WTC11 (cell line): ENCODE measurements at regions of chr6 and their contacts with region 1.

Region 1: DNA sequence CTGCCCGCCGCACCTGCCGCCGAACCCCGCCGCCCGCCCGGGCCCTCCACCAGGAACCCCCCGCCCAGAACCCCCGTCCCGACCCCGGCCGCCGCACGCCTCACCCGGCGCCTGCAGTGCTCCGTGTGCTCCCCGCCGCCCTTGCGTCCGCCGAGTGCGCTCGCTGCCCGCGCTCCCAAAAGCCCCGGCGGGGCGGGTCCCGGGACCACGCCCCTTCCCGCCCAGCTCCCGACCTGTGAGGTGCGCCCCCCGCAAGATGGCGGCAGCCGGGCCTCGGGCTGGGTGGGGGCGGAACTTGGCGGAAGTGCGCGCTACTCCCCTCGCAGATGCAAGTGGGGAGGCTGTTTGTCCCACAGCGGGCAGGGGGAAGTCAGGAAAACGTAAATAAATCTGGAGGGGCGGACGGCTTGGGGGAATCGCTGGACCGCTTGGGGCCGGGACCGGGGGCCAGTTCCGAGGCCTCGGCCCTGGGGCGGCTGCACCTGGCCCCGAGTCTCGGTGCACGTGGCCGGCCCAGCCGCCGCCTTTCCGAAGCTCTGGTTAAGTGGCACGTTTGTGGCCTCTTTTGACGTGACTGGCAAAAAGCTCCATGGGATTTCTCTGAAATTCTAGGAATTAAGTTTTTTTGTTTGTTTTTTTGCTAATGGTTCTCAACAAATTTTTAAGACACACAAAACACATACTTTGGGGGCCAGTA is at the start of gene EZR:
- DNase-seq: peak; percentile 86
- ATAC-seq: peak; percentile 70
- H3K4me3 Mint-ChIP-seq: peak within 1 kb of the TSS; percentile 95
- H3K27ac Mint-ChIP-seq: no peak within 1 kb of the TSS
- H3K4me1 Mint-ChIP-seq: peaks cover 38% of the 10 kb centered on the region
- H3K27me3 Mint-ChIP-seq: peaks cover 16% of the 10 kb centered on the region
- CTCF ChIP-seq: no peak
- total RNA-seq, gene EZR: 194 to 215 TPM (median 199 TPM) in 3 replicates

Region 2: GRCh38 chr6:158840488-158841106 is 21.2 kb after region 1 on chr6:
- CTCF ChIA-PET with region 1: no interaction called
- POLR2A ChIA-PET with region 1: no interaction called
- DNase-seq: no peak
- ATAC-seq: no peak
- H3K4me3 Mint-ChIP-seq: no peak overlapping the region
- H3K27ac Mint-ChIP-seq: no peak overlapping the region
- H3K4me1 Mint-ChIP-seq: peaks cover 10% of the 10 kb centered on the region
- H3K27me3 Mint-ChIP-seq: no peaks in the 10 kb centered on the region
- CTCF ChIP-seq: no peak

Region 3: DNA sequence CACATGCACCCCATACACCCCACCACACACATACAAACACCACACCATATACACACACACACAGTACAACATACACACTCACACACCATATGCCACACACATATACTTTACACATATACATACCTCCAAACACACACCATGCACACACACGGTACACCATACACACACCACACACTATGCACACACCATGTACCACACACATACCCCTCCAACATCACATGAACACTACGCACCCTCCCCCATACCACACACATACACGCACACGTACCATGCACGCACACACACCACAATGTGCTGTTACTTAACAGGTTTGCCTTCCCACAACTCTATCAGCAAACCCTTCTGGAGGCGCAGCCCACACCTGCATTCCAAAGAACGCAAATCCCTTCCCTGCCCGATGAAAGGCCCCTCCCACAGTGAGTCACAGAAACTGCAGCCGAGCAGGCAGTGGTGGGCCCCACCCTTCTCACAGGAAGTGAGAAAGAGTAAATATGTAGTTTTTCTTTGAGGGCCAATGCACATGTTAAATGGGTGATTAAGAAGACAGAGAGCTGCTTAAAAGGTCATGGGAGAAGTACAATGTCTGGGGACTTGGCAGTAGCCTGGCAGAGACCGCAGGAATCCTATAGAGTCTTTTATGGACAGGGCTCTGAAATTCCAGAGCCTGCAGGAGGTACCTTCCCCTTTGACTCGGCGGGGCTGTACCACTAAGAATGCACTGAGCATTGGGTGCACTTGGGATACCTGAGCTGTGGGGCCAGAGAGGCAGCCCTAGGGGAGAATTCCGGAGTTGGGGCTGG is 33.9 kb after region 1 on chr6:
- CTCF ChIA-PET with region 1: interaction called, 3 read pairs
- POLR2A ChIA-PET with region 1: interaction called, 18 read pairs
- DNase-seq: peak; percentile 91
- ATAC-seq: peak; percentile 89
- H3K4me3 Mint-ChIP-seq: no peak overlapping the region
- H3K27ac Mint-ChIP-seq: no peak overlapping the region
- H3K4me1 Mint-ChIP-seq: peaks cover 36% of the 10 kb centered on the region
- H3K27me3 Mint-ChIP-seq: no peaks in the 10 kb centered on the region
- CTCF ChIP-seq: no peak